Panc1 (cell line): ENCODE measurements at regions of chr7 and their contacts with region 1.

Region 1: GRCh38 chr7:140624389-140625191 is 16.0 kb downstream of the DENND2A start:
- DNase-seq: no peak
- ATAC-seq: no peak
- H3K4me3 ChIP-seq: no peak overlapping the region
- H3K27ac ChIP-seq: no peak overlapping the region
- H3K4me1 ChIP-seq: peaks cover 5% of the 10 kb centered on the region; the same call in 1 of the 2 replicates
- H3K27me3 ChIP-seq: no peaks in the 10 kb centered on the region
- CTCF ChIP-seq: no peak

Region 2: GRCh38 chr7:140242057-140243031 is 382.2 kb before region 1 on chr7:
- CTCF ChIA-PET with region 1: no interaction called
- POLR2A ChIA-PET with region 1: no interaction called
- in situ Hi-C with region 1: no loop called
- intact Hi-C with region 1: no loop called
- DNase-seq: no peak
- ATAC-seq: no peak
- H3K4me3 ChIP-seq: no peak overlapping the region
- H3K27ac ChIP-seq: no peak overlapping the region
- H3K4me1 ChIP-seq: no peaks in the 10 kb centered on the region
- H3K27me3 ChIP-seq: no peaks in the 10 kb centered on the region
- CTCF ChIP-seq: no peak

Region 3: GRCh38 chr7:140646931-140647647 is 22.5 kb after region 1 on chr7:
- CTCF ChIA-PET with region 1: interaction called, 15 read pairs
- POLR2A ChIA-PET with region 1: interaction called, 5 read pairs
- in situ Hi-C with region 1: no loop called
- intact Hi-C with region 1: no loop called
- DNase-seq: no peak
- ATAC-seq: peak; percentile 90
- H3K4me3 ChIP-seq: no peak overlapping the region
- H3K27ac ChIP-seq: no peak overlapping the region
- H3K4me1 ChIP-seq: no peaks in the 10 kb centered on the region
- H3K27me3 ChIP-seq: no peaks in the 10 kb centered on the region
- CTCF ChIP-seq: peak; percentile 80